ENCODE measurements at regions of chr9 and their contacts with region 1.

Region 1: DNA sequence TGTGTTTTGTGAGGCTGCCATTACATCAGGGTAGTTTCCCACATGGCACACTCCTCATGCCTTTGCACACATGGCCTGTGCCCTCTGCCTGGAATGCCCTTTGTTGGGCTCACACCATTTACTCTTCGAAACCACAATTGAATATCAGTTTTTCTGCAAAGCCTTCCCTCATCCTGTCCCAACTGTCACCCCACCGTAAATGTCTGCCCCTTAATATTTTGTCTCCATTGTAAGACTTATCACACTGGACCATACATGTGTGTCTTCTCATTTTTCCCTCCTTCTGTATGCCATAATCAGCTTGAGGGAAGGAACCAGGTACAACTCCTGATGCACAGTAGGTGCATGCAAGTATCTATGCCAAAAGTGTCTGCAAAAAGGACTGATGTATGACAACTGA is 62.7 kb upstream of the TMEM252 start:
- DNase-seq: no peak
- H3K4me3 Mint-ChIP-seq: no peak overlapping the region
- H3K27ac Mint-ChIP-seq: no peak overlapping the region
- H3K4me1 Mint-ChIP-seq: no peaks in the 10 kb centered on the region
- H3K27me3 Mint-ChIP-seq: peaks cover 13% of the 10 kb centered on the region

Region 2: DNA sequence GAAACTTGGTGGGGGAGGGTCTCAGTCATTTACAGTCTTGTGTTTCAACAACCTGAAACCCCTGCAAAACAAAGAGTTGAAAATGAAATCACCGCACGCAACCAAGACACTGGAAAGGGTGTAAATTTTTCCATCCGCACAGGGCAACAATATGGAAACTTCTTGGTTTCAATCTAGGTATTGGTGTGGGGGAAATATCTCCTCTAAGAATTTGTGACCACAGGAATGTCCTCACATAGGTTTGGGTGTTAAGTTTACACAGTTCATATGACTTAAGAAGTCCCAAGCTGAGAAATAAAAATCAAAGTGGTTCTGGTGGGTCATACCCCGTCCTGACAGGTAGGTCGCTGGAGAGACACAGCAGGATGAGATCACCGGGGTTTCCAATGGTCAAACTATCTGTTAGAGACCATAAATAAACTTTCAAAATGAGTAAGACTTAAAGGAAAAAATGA is 49.8 kb after region 1 on chr9:
- CTCF ChIA-PET with region 1: no interaction called
- intact Hi-C with region 1: loop called (anchors 5 kb)
- DNase-seq: peak; percentile 34
- H3K4me3 Mint-ChIP-seq: no peak overlapping the region
- H3K27ac Mint-ChIP-seq: no peak overlapping the region
- H3K4me1 Mint-ChIP-seq: peaks cover 23% of the 10 kb centered on the region
- H3K27me3 Mint-ChIP-seq: peaks cover 22% of the 10 kb centered on the region

Measured in activated naive CD4-positive, alpha-beta T cell treated with anti-CD3 and anti-CD28 coated beads for 36 hours (primary cell).